ENCODE measurements at regions of chr19 and their contacts with region 1.

Region 1: GRCh38 chr19:13597640-13598039 is 91.4 kb upstream of the CACNA1A start:
- DNase-seq: no peak
- H3K4me3 ChIP-seq: no peak overlapping the region
- H3K27ac ChIP-seq: no peak overlapping the region
- H3K4me1 ChIP-seq: no peaks in the 10 kb centered on the region
- H3K27me3 ChIP-seq: peaks cover 0 to 60% (median 0%) of the 10 kb centered on the region in 7 donors
- CTCF ChIP-seq: peak in 10 of 11 experiments; percentile 18 to 70 (median 52)
- POLR2A ChIP-seq: no peak

Region 2: DNA sequence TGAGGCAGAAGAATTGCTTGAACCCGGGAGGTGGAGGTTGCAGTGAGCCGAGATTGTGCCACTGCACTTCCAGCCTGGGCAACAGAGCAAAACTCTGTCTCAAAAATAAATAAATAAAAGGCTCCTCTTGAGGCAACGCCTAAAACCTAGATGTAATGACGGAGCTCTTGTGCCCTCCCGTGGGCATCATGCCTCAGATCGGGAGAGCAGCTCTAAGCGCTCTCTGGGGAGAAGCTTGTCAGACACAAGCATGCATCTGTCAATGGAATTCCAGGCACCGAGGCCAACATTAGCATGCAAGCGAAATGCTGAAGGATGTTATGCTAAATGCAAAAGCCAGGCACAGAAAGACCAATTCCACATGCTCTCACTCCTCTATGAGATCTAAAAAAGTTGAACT is 121.1 kb after region 1 on chr19:
- intact Hi-C with region 1: loop called (anchors 10 kb)
- DNase-seq: no peak
- H3K4me3 ChIP-seq: no peak overlapping the region
- H3K27ac ChIP-seq: no peak overlapping the region
- H3K4me1 ChIP-seq: no peaks in the 10 kb centered on the region
- H3K27me3 ChIP-seq: peaks cover 0 to 48% (median 0%) of the 10 kb centered on the region in 7 donors
- CTCF ChIP-seq: no peak
- POLR2A ChIP-seq: no peak